Activated B cell treated with CpG ODN at 0.5 μM for 24 hours (primary cell): ENCODE measurements at regions of chr12 and their contacts with region 1.

Region 1: GRCh38 chr12:111807232-111807631 is 34.8 kb upstream of the MAPKAPK5 start:
- DNase-seq: no peak
- ATAC-seq: no peak
- H3K4me3 Mint-ChIP-seq: no peak overlapping the region
- H3K27ac Mint-ChIP-seq: no peak overlapping the region
- H3K4me1 Mint-ChIP-seq: no peaks in the 10 kb centered on the region
- H3K27me3 Mint-ChIP-seq: no peaks in the 10 kb centered on the region
- CTCF ChIP-seq: no peak

Region 2: DNA sequence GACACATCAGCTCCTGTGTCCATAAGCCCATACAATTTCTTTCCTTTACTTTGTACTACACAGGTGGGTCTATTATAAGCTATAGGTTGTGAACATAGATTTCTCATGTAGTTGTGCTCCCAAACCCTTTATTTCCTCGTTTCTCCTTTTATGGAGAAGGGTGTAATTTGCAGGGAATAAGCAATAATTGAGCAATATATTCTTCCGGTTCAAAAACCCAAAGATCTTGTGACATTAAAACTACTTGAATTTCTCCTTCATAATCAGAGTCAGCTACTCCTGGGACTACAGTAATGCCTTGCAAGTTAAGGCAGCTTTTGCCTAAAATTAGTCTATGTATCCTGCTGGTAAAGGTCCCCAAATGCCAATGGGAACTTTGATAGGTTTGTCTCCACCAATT is 15.7 kb after region 1 on chr12:
- CTCF ChIA-PET with region 1: no interaction called
- POLR2A ChIA-PET with region 1: no interaction called
- intact Hi-C with region 1: loop called (anchors 1 kb)
- DNase-seq: no peak
- ATAC-seq: no peak
- H3K4me3 Mint-ChIP-seq: no peak overlapping the region
- H3K27ac Mint-ChIP-seq: no peak overlapping the region
- H3K4me1 Mint-ChIP-seq: no peaks in the 10 kb centered on the region
- H3K27me3 Mint-ChIP-seq: peaks cover 20% of the 10 kb centered on the region
- CTCF ChIP-seq: no peak